Activated naive CD4-positive, alpha-beta T cell treated with anti-CD3 and anti-CD28 coated beads for 36 hours (primary cell): ENCODE measurements at regions of chr18 and their contacts with region 1.

Region 1: GRCh38 chr18:45621061-45621511 is 5.8 kb downstream of the SLC14A2 start:
- DNase-seq: peak; percentile 51
- H3K4me3 Mint-ChIP-seq: no peak overlapping the region
- H3K27ac Mint-ChIP-seq: no peak overlapping the region
- H3K4me1 Mint-ChIP-seq: no peaks in the 10 kb centered on the region
- H3K27me3 Mint-ChIP-seq: no peaks in the 10 kb centered on the region

Region 2: GRCh38 chr18:45785134-45785533 is 164.0 kb after region 1 on chr18:
- CTCF ChIA-PET with region 1: no interaction called
- intact Hi-C with region 1: no loop called
- DNase-seq: peak; percentile 31
- H3K4me3 Mint-ChIP-seq: no peak overlapping the region
- H3K27ac Mint-ChIP-seq: no peak overlapping the region
- H3K4me1 Mint-ChIP-seq: peaks cover 5% of the 10 kb centered on the region
- H3K27me3 Mint-ChIP-seq: no peaks in the 10 kb centered on the region

Region 3: DNA sequence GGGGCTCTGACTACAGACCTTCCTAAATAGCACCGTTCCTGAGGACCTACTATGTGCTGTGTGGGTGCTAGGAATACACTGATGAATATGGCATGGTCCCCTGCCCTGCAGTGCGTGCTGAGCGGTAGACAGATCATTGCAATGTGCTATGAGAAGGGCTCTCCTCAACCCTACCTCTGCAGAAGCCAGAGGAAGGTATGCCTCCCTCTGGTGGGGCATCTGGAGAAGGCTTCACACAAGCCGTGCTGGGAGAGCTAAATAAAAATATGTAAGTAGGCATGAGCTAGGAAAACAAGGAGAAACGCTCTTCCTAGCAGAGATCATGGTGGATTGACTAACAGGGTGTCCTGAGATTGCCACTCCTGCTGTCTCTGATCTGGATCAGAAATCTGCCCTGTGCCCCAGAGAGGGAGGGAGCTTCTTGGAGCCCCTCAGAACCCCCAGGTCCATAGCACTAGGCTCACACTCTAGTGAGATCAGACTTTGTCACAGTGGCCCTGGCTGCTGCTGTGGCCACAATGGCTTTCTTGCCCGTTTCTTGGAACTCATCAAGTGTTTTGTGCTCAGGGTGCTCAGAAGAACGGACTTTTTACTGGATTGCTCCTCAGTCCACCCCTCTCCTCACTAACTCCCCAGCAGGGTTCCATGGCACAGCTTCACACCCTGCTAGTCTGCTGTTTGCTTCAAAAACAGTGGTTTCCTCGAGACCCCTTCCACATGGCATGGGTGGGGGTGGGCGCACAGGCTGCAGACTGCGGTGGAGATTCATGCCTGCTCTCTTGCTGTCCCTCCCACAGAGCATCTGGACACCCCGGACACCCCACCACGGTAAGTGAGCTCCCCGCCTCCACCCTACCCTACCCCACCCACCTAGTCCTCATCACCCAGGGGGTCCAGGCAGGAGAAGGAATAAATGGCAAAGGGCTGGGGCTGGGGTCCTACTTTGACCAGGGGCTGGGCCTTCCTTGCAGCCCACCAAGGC is 218.6 kb after region 1 on chr18:
- CTCF ChIA-PET with region 1: no interaction called
- intact Hi-C with region 1: loop called (anchors 2 kb)
- DNase-seq: peak; percentile 49
- H3K4me3 Mint-ChIP-seq: no peak overlapping the region
- H3K27ac Mint-ChIP-seq: no peak overlapping the region
- H3K4me1 Mint-ChIP-seq: peaks cover 11% of the 10 kb centered on the region
- H3K27me3 Mint-ChIP-seq: peaks cover 28% of the 10 kb centered on the region

Region 4: DNA sequence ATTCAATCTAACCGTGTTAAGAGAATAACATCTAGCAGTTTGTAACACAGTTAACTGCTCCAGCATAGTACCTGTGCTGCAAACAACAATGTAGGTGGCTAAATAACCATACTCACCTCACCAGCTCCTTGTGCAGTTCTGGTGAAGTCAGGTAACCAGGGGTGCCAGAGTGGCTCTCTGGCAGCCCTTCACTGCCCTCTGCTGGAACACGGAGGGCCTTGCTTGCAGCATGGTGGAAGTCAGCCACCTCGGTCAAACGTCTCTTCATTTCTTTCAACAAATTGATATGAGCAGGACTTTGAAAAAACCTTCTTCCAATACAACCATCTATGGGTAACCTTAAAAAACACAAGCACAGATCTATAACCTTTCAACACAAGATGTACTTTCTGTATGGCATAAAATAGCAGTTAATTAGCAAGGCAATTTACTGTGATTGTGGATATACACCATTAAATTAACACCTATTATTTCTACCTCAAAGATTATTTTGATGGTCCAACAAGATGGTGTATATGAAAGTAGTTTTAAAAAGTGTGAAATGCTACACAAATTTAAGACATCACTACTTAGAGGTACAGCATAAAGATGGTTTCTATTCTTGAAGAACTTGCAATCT is 289.4 kb after region 1 on chr18:
- CTCF ChIA-PET with region 1: interaction called, 4 read pairs
- intact Hi-C with region 1: loop called (anchors 1 kb)
- DNase-seq: peak; percentile 76
- H3K4me3 Mint-ChIP-seq: no peak overlapping the region
- H3K27ac Mint-ChIP-seq: no peak overlapping the region
- H3K4me1 Mint-ChIP-seq: no peaks in the 10 kb centered on the region
- H3K27me3 Mint-ChIP-seq: no peaks in the 10 kb centered on the region

Region 5: DNA sequence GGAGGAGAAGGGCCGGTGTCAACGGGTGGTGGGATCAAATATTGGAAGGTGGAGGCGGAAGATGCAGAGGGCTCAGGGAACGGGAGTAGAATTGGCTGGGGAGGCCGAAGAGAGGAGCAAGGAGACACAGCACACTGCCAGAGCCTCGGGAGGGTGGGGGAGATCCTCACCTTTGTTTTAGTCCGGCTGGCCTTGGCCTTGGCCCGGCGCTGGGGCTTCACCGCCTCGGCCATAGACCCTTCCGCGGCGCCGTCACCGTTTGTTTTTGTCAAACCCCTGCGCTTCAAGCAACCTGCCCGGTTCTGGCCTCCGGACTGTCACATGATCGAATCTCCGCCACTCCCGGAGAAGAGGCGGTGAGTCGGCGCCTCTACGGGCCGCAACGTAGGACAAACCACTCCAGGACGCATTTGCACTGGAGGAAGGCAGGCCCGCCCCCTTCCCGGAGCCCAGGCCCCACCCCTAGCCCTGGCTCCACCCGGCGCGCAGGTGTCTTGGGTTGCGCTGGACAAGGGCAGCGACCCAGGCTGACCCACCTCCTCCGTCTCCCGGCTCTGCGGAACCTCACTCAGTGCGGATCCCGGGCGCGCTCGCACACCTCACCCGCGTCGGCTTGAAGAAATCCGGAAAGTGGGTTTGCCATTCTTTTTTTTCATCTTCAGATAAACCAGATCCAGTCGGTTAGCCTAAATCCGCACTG is 346.1 kb after region 1 on chr18 and contains the start of gene EPG5:
- CTCF ChIA-PET with region 1: no interaction called
- intact Hi-C with region 1: loop called (anchors 1 kb)
- DNase-seq: peak; percentile 98
- H3K4me3 Mint-ChIP-seq: peak within 1 kb of the TSS; percentile 97
- H3K27ac Mint-ChIP-seq: peak within 1 kb of the TSS; percentile 86
- H3K4me1 Mint-ChIP-seq: peaks cover 33% of the 10 kb centered on the region
- H3K27me3 Mint-ChIP-seq: no peaks in the 10 kb centered on the region
- total RNA-seq, gene EPG5: 18.3 to 21.2 TPM